ENCODE measurements at regions of chr13 and their contacts with region 1.

Region 1: DNA sequence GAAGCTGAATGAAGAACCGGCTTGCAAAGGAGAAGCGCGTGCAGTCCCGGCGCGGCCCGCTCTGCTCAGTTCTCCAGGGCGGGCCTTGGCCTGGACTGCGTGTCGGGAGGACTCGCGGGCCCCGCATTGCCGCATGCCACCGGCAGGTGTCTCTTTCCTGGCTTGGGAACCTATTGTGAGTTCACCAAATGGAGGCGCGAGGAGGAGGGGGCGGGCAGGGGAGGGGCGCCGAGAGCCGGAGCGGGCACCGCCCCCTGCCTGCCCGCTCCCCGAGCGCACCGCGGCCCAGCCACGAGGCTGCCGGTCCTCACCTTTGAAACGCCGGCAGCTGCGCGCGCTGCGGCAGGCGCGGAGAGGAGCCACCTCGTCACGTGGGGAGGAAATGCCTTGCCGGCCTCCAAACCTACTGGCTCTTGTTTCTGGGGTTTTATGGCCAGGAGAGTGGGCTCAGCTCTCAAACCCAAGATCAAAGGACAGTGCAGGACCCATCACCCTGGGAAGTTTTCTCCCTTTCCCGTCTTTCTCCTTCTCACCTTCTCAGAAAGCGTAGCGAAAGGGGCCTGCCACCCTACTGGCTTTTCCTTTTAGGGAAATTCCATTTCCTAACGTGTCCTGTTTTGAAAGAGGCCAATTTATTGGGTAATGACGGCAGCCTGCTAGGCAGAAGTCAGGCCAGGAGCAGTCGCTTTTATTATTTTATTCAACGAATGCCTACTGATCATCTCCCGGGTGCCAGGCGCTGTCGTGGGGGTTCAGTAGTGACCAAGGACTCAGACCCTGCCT is 13.8 kb upstream of the UBE2L5 start:
- DNase-seq: peak; percentile 97 to 98
- ATAC-seq: peak; percentile 95 to 97 (median 96)
- H3K4me3 ChIP-seq: peak overlapping the region; percentile 65
- H3K27ac ChIP-seq: peak overlapping the region; percentile 85
- H3K4me1 ChIP-seq: peaks cover 5% of the 10 kb centered on the region
- H3K27me3 ChIP-seq: no peaks in the 10 kb centered on the region
- CTCF ChIP-seq: peak; percentile 78

Region 2: GRCh38 chr13:30446126-30446500 is 37.6 kb after region 1 on chr13:
- intact Hi-C with region 1: loop called (anchors 5 kb)
- DNase-seq: no peak
- ATAC-seq: no peak
- H3K4me3 ChIP-seq: peak overlapping the region; percentile 62
- H3K27ac ChIP-seq: peak overlapping the region; percentile 85
- H3K4me1 ChIP-seq: peaks cover 6% of the 10 kb centered on the region
- H3K27me3 ChIP-seq: no peaks in the 10 kb centered on the region
- CTCF ChIP-seq: no peak

Measured in psoas muscle (tissue), 8 donors.